ENCODE measurements at regions of chr4 and their contacts with region 1.

Region 1: DNA sequence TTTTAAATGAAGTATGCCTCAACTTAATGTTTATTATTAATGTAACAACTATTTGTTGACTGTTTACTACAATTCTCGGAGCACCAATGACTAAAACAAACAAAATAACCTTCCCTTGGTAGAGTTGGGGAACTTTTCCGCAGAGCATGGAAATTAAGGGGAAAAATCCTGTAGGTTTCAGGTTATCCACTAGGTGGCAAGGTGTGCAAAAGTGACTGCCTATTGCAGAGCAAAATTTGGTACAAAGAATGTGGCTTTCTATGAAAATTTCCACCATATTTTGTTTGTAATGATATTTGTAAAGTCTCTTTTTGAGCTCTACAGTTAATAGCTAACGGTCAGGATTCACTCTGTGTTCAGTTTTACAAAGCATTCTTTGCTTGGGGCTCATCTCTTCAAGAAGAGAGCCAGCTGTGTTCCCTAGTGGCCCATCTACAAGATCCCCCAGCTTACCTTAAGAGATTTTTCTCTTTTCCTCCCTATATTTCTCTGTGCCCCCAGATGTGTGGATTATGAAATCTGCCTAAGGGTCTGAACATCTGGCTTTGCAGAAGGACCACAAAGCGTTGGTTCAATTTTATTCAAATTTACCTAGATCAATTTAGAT is 61.1 kb downstream of the FBXO8 start:
- DNase-seq: peak; percentile 14
- H3K4me3 ChIP-seq: no peak overlapping the region
- H3K27ac ChIP-seq: no peak overlapping the region
- H3K4me1 ChIP-seq: peaks cover 6% of the 10 kb centered on the region
- H3K27me3 ChIP-seq: peaks cover 15% of the 10 kb centered on the region
- CTCF ChIP-seq: peak; percentile 64 to 78

Region 2: DNA sequence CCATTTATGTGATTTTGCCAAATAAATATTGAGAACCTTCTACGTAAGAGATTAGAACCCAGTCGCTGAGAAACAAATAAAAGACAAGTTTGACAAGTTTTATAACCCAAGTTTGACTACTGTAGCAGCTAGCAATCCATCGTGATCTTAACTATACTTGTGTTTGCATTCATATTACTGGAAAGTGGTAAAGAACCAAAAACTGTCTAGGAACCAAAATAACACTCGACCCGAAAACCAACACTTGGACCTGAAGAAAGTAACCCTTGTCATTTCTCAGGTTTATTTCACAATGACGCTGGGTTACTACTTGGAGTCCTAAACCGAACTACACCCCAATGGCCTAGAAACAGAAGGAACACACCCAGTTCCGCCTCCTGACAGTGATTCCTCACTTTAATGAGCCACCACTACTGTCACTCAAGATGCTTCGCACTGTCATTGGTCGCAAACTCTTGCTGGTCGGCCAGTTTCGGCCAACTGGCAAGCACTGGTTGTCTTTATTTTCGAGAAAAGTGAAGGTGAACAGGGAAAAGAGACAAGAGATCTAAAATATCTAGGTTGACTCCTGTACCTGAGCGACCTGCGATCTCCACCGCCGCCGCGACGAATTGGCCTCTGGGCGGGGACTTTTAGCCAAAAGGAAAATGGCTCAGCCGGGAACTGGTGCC is 60.6 kb after region 1 on chr4:
- CTCF ChIA-PET with region 1: no interaction called
- dilution Hi-C with region 1: no loop called
- in situ Hi-C with region 1: no loop called
- intact Hi-C with region 1: loop called (anchors 1 kb)
- DNase-seq: peak; percentile 96
- H3K4me3 ChIP-seq: peak overlapping the region; percentile 78 to 94 (median 81)
- H3K27ac ChIP-seq: peak overlapping the region; percentile 96
- H3K4me1 ChIP-seq: peaks cover 3% of the 10 kb centered on the region
- H3K27me3 ChIP-seq: no peaks in the 10 kb centered on the region
- CTCF ChIP-seq: no peak

Region 3: GRCh38 chr4:174318829-174319764 is 96.7 kb after region 1 on chr4:
- CTCF ChIA-PET with region 1: no interaction called
- dilution Hi-C with region 1: no loop called
- in situ Hi-C with region 1: loop called (anchors 10 kb)
- intact Hi-C with region 1: loop called (anchors 1 kb)
- DNase-seq: peak; percentile 27
- H3K4me3 ChIP-seq: no peak overlapping the region
- H3K27ac ChIP-seq: no peak overlapping the region
- H3K4me1 ChIP-seq: peaks cover 10% of the 10 kb centered on the region
- H3K27me3 ChIP-seq: no peaks in the 10 kb centered on the region
- CTCF ChIP-seq: peak; percentile 64 to 69

Region 4: GRCh38 chr4:174324725-174325124 is 102.4 kb after region 1 on chr4:
- CTCF ChIA-PET with region 1: no interaction called
- dilution Hi-C with region 1: no loop called
- in situ Hi-C with region 1: loop called (anchors 10 kb)
- intact Hi-C with region 1: loop called (anchors 1 kb)
- DNase-seq: peak; percentile 69
- H3K4me3 ChIP-seq: no peak overlapping the region
- H3K27ac ChIP-seq: no peak overlapping the region
- H3K4me1 ChIP-seq: peaks cover 3% of the 10 kb centered on the region
- H3K27me3 ChIP-seq: no peaks in the 10 kb centered on the region
- CTCF ChIP-seq: no peak